ENCODE measurements at regions of chr9 and their contacts with region 1.

Region 1: DNA sequence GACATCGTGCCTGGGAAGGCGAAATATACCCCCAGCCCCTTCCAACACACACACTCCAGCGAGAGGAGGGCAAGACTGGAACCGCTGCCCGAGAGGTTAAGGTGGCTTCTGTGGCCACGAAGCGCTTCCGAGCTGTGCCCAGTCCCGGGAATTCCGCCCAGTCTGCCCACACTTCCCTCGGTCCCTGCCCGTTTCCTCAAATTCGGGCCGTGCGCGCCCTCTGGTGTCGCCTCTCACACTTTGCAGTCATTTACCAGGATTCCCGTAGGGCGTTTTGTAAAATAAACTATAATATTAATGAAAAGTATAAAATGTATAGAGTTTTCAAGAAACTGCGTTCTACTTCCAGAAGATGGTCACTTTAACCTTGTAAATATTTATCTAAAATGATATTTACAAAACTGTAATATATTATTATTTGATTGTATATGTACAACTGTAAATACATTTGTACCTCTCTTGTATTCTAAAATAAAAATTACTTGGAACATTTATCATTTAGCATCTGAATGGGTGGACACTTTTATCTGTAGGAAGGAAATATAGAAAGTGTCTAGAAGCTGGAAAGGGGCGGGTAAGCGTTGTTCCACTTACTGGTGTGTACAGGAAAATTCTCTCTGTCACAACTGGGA is 11.0 kb upstream of the EXOSC2 start:
- DNase-seq: peak; percentile 69
- ATAC-seq: peak; percentile 63
- H3K4me3 ChIP-seq: peak overlapping the region; percentile 59 to 62
- H3K27ac ChIP-seq: peak overlapping the region; percentile 78; the same call in 1 of the 2 replicates
- H3K4me1 ChIP-seq: peaks cover 4 to 16% of the 10 kb centered on the region in 2 experiments
- H3K27me3 ChIP-seq: no peaks in the 10 kb centered on the region
- CTCF ChIP-seq: peak; percentile 68 to 96 (median 74)
- POLR2A ChIP-seq: no peak
- RAD21 ChIP-seq: peak; percentile 97

Region 2: DNA sequence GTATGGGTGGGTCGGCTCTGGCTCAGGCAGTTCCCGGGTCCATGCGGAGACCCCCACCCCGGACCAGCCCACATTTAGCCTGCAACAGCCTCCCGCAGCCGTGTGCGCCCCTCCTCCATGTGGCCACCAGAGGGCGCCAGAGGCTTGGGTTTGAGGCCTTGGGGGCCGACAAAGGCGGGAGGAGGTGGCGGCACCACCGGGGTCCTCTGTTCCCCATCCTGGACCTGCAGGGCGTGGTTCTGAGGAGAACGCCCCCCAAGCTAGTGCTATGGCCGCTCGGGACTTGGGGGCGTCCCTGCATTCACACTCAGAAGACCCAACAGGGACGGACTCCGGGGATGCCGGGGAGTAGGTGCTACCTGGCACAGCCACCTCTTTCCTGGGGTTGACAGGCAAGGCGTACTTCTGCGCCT is 221.4 kb before region 1 on chr9:
- CTCF ChIA-PET with region 1: interaction called, 16 read pairs
- POLR2A ChIA-PET with region 1: interaction called, 4 read pairs
- RAD21 ChIA-PET with region 1: interaction called in 1 of 2 experiments, 6 read pairs
- intact Hi-C with region 1: loop called (anchors 1 kb)
- DNase-seq: no peak
- ATAC-seq: peak; percentile 87
- H3K4me3 ChIP-seq: no peak overlapping the region
- H3K27ac ChIP-seq: no peak overlapping the region
- H3K4me1 ChIP-seq: no peaks in the 10 kb centered on the region
- H3K27me3 ChIP-seq: no peaks in the 10 kb centered on the region
- CTCF ChIP-seq: peak; percentile 83 to 89 (median 88)
- POLR2A ChIP-seq: no peak
- RAD21 ChIP-seq: peak; percentile 96

Region 3: DNA sequence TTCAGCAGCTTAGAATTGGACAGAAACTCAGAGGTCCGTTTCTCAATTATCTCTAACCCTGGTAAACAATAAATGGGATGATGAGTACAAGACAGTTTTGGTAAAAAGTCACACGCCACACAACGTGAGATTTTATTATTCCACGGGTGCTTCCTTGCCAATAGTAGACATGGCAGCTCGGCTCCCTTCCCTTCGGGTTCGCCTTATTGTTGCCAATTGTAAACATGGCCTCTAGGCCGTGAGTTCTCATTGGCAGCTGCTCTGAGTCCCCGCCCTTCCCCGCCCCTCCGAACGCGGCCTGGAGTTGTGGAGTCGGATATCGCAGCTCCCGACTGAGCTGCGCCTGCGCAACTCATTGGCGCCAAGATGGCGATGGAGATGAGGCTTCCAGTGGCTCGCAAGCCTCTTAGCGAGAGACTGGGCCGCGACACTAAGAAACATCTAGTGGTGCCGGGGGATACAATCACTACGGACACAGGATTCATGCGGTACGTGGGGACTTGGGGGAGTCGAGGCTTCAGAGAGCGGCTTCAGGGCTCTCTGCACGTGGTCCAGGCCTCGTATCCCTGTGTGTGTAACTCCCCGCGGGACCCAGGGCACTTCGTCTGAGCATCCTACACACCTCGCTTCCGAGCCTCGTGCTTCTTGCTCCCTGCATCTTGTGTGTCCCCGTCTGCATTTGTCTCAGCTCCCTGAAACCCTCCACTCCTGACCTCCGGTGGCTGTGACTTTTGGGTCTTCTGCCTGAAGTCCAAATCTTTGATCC is 11.0 kb after region 1 on chr9 and contains the start of gene EXOSC2:
- CTCF ChIA-PET with region 1: interaction called, 16 read pairs
- POLR2A ChIA-PET with region 1: interaction called, 4 read pairs
- RAD21 ChIA-PET with region 1: no interaction called
- intact Hi-C with region 1: no loop called
- DNase-seq: peak; percentile 96
- ATAC-seq: peak; percentile 93
- H3K4me3 ChIP-seq: peak within 1 kb of the TSS; percentile 77 to 88
- H3K27ac ChIP-seq: peak within 1 kb of the TSS; percentile 63
- H3K4me1 ChIP-seq: peaks cover under 1 to 33% of the 10 kb centered on the region in 2 experiments
- H3K27me3 ChIP-seq: no peaks in the 10 kb centered on the region
- CTCF ChIP-seq: no peak
- POLR2A ChIP-seq: peak; percentile 92
- RAD21 ChIP-seq: no peak
- total RNA-seq, gene EXOSC2: 71.5 TPM

Region 4: DNA sequence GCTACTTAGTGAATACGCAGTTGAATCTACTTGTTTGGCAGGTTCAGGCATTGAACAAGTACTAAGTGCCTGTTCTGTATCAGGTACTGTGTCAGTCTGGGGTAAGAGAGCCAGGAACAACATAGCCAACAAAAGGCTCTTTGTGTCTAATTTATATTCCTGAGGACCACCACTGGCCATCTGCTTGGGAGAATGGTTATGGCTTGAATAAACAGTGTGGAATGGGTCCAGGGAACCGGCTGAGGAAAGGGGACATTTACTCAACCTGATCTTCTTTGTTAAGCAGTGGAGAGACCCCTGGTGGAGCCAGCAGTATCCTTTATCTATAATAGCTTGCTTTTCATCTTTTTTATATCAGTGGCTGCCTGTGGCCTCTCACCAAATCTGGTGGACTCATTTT is 49.5 kb after region 1 on chr9:
- CTCF ChIA-PET with region 1: no interaction called
- POLR2A ChIA-PET with region 1: no interaction called
- RAD21 ChIA-PET with region 1: no interaction called
- intact Hi-C with region 1: no loop called
- DNase-seq: no peak
- ATAC-seq: no peak
- H3K4me3 ChIP-seq: no peak overlapping the region
- H3K27ac ChIP-seq: no peak overlapping the region
- H3K4me1 ChIP-seq: peaks cover 38 to 51% of the 10 kb centered on the region in 2 experiments
- H3K27me3 ChIP-seq: no peaks in the 10 kb centered on the region
- CTCF ChIP-seq: peak; percentile 21 to 26 (median 22); a peak in 3 of 6 replicates
- POLR2A ChIP-seq: no peak
- RAD21 ChIP-seq: 0 out of 2 replicates have a peak, but pooled peaks have one; percentile 29

Measured in HCT116 (cell line).